ENCODE measurements at regions of chr10 and their contacts with region 1.

Region 1: DNA sequence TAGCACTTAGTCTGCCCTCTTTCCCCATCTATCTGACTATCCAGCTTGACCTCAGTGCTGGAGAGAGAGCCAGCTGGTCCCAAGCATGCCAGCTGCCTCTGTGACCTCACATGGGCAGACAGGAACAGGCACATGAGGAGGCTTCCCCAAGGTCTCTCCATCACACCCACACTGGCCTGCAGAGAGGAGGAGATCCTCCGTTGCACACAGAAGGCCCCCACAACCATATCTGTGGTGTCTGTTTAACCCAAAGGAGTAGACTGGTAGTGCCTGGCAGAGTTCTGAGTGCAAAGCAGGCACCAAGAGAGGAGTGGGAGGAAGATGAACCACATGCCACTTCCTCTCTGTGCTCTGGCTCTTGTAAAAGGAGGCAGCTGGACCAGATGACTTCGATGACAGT is 4.8 kb upstream of the ANK3 start:
- DNase-seq: no peak

Region 2: GRCh38 chr10:59019603-59020002 is 1374.8 kb before region 1 on chr10:
- intact Hi-C with region 1: no loop called
- DNase-seq: no peak

Region 3: DNA sequence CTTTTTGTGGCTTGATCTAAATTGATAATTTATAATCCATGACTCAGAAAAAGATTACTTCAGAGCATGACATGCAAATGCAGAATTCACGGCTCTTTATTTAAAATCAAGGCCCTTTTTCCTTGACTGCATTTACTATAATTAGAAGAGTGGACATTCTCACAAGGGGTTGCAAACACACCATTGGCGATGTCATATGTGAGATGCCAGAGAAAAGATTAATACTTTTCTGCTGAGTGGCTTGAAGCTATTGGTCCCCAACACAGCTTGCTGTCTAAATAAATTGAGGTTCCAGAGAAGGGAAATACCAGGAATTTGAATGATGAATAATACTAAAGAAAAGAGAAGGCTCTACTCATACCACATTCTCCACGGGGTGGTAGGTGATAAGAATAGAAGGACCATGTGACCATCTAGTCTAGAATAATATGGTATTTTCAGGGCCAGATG is 1428.4 kb after region 1 on chr10:
- intact Hi-C with region 1: loop called in 1 of 2 experiments (anchors 5 kb)
- DNase-seq: no peak